Motor neuron (in vitro differentiated cells): ENCODE measurements at regions of chr4 and their contacts with region 1.

Region 1: GRCh38 chr4:154506253-154506652 is 14.7 kb upstream of the DCHS2 start:
- ATAC-seq: peak in 5 of 8 experiments; percentile 50 to 77 (median 69)
- H3K4me3 ChIP-seq: no peak overlapping the region
- H3K27ac ChIP-seq: no peak overlapping the region
- H3K4me1 ChIP-seq: peaks cover 10 to 22% of the 10 kb centered on the region in 2 donors

Region 2: DNA sequence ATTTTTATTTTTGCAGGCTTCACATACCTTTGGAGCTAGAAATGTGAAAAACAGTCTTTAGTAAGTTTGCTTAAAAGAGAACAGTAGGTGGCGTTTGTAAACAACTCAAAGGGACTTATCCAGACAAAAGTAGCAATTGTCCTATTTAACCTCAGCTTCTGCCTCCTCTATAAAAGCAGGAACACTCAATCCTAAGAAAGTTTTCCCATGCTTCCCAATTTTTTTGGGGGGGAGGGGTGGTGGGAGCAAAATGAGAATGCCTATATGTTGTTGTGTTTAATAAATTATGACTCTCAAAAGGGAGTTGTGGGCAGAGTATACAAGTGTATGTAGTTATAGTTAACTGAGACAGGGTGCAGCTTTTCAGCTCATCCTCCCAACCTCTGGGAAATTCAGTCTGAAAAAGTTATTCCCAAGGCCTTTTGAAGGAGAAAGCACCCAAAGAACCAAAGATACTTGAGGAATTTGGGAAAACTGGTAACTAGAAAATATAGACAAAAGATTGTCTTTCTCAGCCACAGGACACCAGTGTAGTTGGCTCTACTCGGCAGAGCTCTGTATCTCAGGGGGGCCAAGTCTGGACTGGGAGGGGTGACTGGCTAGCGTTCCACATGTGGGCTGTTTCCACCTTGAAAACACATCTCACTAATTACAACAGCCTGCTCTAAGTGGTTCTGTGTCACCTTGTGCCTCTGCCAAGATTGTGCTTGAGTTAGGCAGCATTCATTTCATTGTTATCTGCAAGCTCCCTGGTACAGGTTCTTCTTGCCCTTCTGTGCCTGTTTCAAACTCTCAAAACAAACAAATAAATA is 720.1 kb before region 1 on chr4:
- in situ Hi-C with region 1: loop called in 2 of 9 experiments (anchors 25 kb)
- ATAC-seq: peak in 4 of 8 experiments; percentile 3 to 52 (median 36)
- H3K4me3 ChIP-seq: peak overlapping the region in 3 of 5 donors; percentile 8 to 49 (median 10)
- H3K27ac ChIP-seq: no peak overlapping the region
- H3K4me1 ChIP-seq: peaks cover 13 to 20% of the 10 kb centered on the region in 2 donors

Region 3: DNA sequence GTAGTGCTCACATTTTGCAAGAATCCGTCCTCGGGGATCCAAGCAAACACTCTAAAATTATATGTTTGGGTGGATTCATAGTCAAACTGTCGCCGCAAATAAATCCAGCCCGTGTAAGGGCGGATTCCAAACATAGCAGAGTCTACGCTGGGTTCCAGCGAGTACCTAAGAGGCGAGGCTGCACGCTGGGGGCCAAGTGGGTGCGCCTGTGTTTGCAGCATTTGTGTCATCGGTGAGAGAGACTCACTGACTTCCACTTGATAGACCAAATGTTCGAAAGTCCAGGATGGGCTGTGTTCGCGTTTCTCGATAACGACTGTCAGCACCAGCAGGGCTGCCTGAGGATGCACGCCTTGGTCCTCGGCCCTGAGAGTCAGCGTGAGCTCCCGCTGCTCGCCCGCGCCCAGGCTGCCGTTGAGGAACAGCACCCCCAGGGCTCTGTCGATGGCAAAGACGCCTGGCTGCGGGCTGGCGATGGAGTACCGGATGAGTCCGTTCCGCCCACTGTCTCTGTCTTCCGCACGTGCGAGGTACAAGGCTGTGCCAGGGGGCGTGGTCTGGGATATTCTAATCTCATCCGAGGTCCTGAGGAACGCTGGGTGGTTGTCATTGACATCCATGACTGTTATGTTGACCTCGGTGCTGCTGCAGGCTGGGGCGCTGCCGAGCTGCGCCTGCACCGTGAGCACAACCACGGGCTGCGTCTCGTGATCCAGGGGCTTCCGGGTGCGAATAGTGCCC is 173.4 kb before region 1 on chr4:
- in situ Hi-C with region 1: loop called in 5 of 9 experiments (anchors 10 to 25 kb)
- ATAC-seq: peak in 2 of 8 experiments; percentile 77 to 94
- H3K4me3 ChIP-seq: peak overlapping the region in 2 of 5 donors; percentile 19 to 23
- H3K27ac ChIP-seq: no peak overlapping the region
- H3K4me1 ChIP-seq: no peaks in the 10 kb centered on the region

Region 4: GRCh38 chr4:154399259-154399974 is 106.8 kb before region 1 on chr4:
- in situ Hi-C with region 1: loop called in 1 of 9 experiments (anchors 10 kb)
- ATAC-seq: peak in 5 of 8 experiments; percentile 36 to 91 (median 84)
- H3K4me3 ChIP-seq: no peak overlapping the region
- H3K27ac ChIP-seq: no peak overlapping the region
- H3K4me1 ChIP-seq: no peaks in the 10 kb centered on the region

Region 5: GRCh38 chr4:154416190-154416547 is 90.1 kb before region 1 on chr4:
- in situ Hi-C with region 1: loop called in 1 of 9 experiments (anchors 10 kb)
- ATAC-seq: peak; percentile 8 to 70 (median 61)
- H3K4me3 ChIP-seq: peak overlapping the region; percentile 35 to 46 (median 39)
- H3K27ac ChIP-seq: peak overlapping the region; percentile 10 to 76
- H3K4me1 ChIP-seq: peaks cover 5 to 10% of the 10 kb centered on the region in 2 donors